WTC11 (cell line): ENCODE measurements at regions of chr16 and their contacts with region 1.

Region 1: DNA sequence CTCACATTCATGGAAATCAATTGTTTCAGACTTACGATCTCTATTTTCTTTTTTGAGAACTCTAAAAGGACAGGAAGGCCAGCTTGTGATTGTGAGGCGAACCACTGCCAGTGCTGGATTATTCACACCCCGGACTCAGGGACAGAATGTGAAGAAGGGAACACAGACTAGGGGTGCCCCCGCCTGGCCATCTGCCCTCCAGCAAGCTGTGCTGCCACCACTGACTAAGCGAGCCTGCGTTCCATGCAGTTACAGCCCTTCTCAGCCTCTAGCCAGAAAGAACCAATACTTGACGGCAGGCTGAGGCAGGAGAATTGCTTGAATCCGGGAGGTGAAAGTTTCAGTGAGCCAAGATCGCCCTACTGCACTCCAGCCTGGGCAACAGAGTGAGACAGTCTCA is 2.8 kb downstream of the HAGH start:
- DNase-seq: peak; percentile 67
- ATAC-seq: peak; percentile 50
- H3K4me3 Mint-ChIP-seq: peak overlapping the region; percentile 45; the same call in 1 of the 2 replicates
- H3K27ac Mint-ChIP-seq: peak overlapping the region; percentile 93
- H3K4me1 Mint-ChIP-seq: peaks cover 16% of the 10 kb centered on the region
- H3K27me3 Mint-ChIP-seq: peaks cover 2% of the 10 kb centered on the region; the same call in 1 of the 2 replicates
- CTCF ChIP-seq: no peak

Region 2: DNA sequence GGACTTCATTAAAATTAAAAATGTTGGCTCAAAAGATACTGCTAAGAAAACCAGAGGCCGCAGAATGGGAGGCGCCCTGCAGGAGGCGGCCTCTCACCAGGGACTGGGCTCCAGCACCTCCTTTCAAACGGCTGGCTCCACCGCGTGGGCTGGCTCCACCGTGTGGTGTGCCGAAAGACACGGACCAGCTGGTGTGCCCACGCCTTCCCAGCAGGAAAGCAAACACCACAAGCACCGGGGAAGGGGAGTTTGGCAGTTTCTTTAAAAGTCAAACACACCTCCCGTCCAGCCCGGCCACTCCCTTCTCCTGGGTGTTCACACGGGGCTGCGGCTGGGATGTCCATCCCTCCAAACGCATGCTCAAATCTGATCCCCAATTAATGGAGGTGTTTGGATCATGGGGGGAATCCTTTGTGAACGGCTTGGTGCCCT is 11.1 kb before region 1 on chr16:
- CTCF ChIA-PET with region 1: interaction called, 16 read pairs
- POLR2A ChIA-PET with region 1: no interaction called
- DNase-seq: peak; percentile 70
- ATAC-seq: peak; percentile 61
- H3K4me3 Mint-ChIP-seq: no peak overlapping the region
- H3K27ac Mint-ChIP-seq: no peak overlapping the region
- H3K4me1 Mint-ChIP-seq: no peaks in the 10 kb centered on the region
- H3K27me3 Mint-ChIP-seq: no peaks in the 10 kb centered on the region
- CTCF ChIP-seq: no peak; the same call in 1 of the 2 replicates